Activated naive CD4-positive, alpha-beta T cell treated with anti-CD3 and anti-CD28 coated beads for 36 hours (primary cell): ENCODE measurements at regions of chr19 and their contacts with region 1.

Region 1: GRCh38 chr19:48993175-48994034 is at the starts of genes GYS1 and RUVBL2:
- DNase-seq: peak; percentile 99
- H3K4me3 Mint-ChIP-seq: peak within 1 kb of the TSS; percentile 83
- H3K27ac Mint-ChIP-seq: peak within 1 kb of the TSS; percentile 94
- H3K4me1 Mint-ChIP-seq: peaks cover 44% of the 10 kb centered on the region
- H3K27me3 Mint-ChIP-seq: no peaks in the 10 kb centered on the region
- total RNA-seq, gene GYS1: 29.6 to 31.2 TPM
- total RNA-seq, gene RUVBL2: 119 to 126 TPM

Region 2: DNA sequence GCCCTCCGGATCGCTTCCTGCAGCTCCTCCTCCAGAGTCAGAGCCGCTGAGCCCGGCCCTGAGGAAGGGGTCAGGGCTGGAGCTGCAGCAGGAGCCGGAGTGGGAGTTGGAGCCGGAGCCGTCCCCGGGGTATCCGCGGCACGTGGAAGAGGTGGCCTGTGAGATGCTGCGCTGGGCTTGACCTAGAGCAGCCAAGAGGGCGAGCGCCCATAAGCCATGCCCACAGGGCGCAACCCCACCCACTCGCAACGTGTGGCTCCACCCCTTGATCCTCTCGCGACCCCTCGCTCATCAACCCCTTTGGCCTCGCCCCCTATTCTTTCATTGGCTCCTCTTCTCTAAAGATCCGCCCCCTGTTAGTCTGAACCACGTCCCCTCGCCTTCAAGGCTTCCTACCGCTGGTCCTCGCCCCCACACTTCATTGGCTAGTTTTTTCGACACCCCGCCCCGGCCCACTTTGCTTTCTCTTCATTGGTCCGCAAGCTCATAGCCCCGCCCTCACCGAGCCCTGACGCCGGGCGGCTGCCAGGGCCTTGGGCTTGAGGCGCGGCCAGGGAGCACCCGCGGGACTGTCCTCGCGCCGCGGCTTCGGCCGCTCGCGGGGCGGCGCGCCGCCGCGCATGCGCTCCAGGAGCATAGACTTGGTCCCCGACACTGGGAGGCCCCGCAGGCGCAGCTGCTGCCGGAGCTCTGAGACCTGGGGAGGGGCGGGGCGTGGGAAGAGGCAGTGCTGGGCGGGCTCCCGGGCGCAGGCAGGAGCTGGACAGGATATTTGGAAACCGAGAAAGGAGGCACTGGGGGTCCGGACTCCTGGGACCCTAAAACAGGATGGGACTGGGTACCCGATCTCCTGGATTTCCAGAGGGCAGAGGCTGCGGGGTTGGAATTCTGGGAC is 279.3 kb before region 1 on chr19:
- CTCF ChIA-PET with region 1: interaction called, 5 read pairs
- intact Hi-C with region 1: loop called (anchors 1 kb)
- DNase-seq: peak; percentile 99
- H3K4me3 Mint-ChIP-seq: peak overlapping the region; percentile 86
- H3K27ac Mint-ChIP-seq: peak overlapping the region; percentile 58
- H3K4me1 Mint-ChIP-seq: peaks cover 11% of the 10 kb centered on the region
- H3K27me3 Mint-ChIP-seq: no peaks in the 10 kb centered on the region

Region 3: DNA sequence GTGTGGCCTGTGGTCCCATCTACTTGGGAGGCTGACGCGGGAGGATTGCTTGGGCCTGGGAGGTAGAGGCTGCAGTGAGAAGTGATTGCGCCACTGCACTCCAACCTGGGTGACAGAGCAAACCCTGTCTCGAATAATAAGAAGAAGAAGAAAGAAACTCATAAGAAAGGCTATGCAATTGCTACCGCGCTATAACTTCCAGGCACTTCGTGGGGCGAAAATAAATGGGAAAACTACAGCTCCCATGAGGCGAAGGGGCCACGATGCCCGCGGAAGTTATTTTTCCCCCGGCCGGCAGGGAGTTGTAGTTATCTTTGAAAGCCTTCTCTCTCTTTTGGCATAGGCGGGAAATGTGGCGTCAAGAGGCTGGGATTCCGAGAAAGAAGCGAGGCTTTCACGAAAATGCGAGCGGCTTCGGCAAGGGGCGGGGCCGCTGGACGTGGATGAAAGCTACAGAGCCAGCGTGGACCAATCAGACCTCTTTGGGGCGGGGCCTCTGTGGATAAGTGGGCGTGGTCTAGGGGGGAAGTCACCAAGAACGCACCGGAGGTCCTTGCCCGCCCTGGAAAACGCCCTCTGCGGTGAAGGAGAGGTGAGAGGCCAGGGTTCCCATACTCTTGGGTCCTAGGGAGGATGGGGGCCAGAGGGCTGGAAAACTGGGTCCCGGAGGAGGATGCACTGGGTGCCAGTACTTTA is 93.5 kb before region 1 on chr19 and contains the start of gene NUCB1:
- CTCF ChIA-PET with region 1: interaction called, 5 read pairs
- intact Hi-C with region 1: loop called (anchors 1 kb)
- DNase-seq: peak; percentile 100
- H3K4me3 Mint-ChIP-seq: peak within 1 kb of the TSS; percentile 97
- H3K27ac Mint-ChIP-seq: peak within 1 kb of the TSS; percentile 96
- H3K4me1 Mint-ChIP-seq: peaks cover 38% of the 10 kb centered on the region
- H3K27me3 Mint-ChIP-seq: peaks cover 5% of the 10 kb centered on the region
- total RNA-seq, gene NUCB1: 172 to 182 TPM

Region 4: DNA sequence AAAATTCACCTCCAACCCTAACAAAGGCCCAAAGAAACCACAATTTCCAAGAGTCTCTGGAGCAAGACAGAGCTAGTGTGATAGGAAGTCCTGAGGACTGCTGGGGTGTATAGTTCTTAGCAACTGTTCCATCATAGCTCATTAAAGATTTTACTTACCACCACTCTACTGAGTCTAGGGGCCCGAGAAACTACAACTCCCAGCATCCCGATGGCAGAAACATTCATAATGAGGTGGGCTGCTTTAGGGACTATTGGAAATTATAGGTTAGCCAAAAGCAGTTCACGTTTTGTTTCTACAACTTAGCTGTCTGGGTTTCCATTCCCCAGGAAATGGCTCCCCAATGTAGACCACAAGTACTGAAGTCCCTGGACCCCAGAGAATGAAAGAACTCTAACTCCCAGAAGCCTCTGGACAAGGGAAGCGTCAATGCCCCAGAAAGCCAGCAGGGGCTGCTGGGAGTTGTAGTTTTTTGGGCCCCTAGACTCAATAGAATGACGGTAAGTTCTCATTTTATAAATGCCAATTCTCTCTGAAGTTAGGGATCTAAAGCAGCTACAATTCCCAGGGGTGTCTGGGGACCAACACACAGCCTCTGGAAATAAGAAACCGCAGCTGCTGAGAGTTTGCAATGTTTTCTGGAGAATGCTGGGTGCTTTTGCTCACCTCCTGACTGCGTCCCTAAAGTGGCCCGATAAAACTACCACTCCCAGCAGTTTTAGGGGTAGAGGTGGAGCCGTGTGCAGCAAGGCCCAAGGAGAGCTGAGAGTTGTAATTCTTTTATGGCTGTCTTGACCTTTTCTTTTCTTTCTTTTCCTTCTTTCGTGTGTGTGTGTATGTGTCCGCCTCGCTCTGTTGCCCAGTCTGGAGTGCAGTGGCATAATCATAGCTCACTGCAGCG is 17.2 kb before region 1 on chr19:
- CTCF ChIA-PET with region 1: interaction called, 11 read pairs
- intact Hi-C with region 1: no loop called
- DNase-seq: peak; percentile 48
- H3K4me3 Mint-ChIP-seq: no peak overlapping the region
- H3K27ac Mint-ChIP-seq: no peak overlapping the region
- H3K4me1 Mint-ChIP-seq: peaks cover 3% of the 10 kb centered on the region
- H3K27me3 Mint-ChIP-seq: no peaks in the 10 kb centered on the region

Region 5: DNA sequence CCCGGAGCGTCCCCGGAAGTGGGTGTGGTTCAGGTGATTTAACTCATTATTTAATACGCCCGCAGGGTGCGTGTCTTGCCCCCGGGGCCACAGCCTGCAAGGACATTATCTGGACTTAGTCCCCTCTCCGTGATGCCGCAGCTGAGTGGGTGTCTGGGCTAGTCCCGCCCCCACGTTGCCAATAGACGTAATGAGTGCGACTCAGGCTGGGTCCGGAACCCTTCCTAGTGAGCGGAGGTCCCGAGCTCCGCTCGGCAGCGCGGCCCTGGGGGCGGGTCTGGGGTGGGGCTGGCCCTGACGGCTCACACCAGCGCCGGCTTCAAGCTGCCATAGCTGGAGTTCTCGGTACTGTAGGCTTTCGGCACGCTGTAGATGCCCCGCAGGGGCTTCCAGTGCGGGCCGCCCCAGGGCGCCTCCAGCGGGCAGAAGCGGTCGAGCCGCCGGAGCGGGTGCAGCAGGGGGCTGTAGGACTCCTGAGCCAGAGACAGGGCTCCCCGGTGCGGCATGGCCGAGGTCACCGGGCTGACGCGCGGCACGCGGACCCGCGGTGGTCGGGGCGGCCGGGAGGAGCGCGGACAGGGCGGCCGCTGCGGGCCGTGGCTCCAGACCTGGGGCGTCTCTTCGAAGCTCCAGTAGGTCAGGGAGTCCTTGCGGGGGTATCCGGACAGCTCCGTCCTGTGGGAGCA is 24.4 kb after region 1 on chr19:
- CTCF ChIA-PET with region 1: interaction called, 22 read pairs
- intact Hi-C with region 1: loop called (anchors 2 kb)
- DNase-seq: peak; percentile 64
- H3K4me3 Mint-ChIP-seq: peak overlapping the region; percentile 74
- H3K27ac Mint-ChIP-seq: no peak overlapping the region
- H3K4me1 Mint-ChIP-seq: peaks cover 27% of the 10 kb centered on the region
- H3K27me3 Mint-ChIP-seq: peaks cover 8% of the 10 kb centered on the region

Region 6: DNA sequence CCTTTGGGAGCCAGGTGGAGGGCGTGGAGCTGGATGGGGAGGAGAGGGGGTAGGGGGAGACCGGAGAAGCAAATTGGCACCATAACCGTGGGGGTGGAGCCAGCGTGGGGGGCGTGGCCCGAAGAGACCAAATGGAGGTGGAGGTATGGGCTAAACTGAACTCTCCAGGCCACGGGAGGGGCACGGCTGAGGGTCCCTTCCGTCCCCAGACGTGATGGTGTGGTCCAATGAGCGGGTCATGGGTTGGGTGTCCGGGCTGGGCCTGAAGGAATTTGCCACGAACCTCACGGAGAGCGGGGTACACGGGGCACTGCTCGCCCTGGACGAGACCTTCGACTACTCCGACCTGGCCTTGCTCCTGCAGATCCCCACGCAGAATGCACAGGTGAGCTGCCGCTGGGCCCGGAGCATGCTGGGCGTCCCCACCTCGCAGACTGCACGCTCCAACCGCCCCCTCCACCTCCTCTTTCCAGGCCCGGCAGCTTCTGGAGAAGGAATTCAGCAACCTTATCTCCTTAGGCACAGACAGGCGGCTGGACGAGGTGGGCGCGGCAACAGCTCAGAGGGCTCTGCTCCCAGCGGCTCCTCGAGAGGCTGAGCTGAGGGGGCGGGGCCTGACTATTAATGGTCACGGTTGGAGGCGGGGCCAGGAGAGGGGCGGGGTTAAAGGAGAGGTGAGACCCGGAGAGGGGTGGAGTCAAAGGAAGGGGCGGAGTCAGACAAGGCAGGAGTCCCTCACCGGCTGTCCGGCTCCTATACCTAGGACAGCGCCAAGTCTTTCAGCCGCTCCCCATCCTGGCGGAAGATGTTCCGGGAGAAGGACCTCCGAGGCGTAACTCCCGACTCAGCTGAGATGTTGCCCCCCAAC is 155.6 kb after region 1 on chr19:
- CTCF ChIA-PET with region 1: interaction called, 9 read pairs
- intact Hi-C with region 1: loop called (anchors 1 kb)
- DNase-seq: peak; percentile 93
- H3K4me3 Mint-ChIP-seq: peak overlapping the region; percentile 51
- H3K27ac Mint-ChIP-seq: no peak overlapping the region
- H3K4me1 Mint-ChIP-seq: peaks cover 24% of the 10 kb centered on the region
- H3K27me3 Mint-ChIP-seq: peaks cover 74% of the 10 kb centered on the region